ENCODE measurements at regions of chr1 and their contacts with region 1.

Region 1: GRCh38 chr1:62601457-62601856 is 4.1 kb downstream of the ANGPTL3 start:
- DNase-seq: peak; percentile 80
- ATAC-seq: peak; percentile 94
- H3K4me3 ChIP-seq: no peak overlapping the region
- H3K27ac ChIP-seq: no peak overlapping the region
- H3K4me1 ChIP-seq: peaks cover 5% of the 10 kb centered on the region; the same call in 1 of the 2 replicates
- H3K27me3 ChIP-seq: no peaks in the 10 kb centered on the region
- CTCF ChIP-seq: no peak
- POLR2A ChIP-seq: no peak
- RAD21 ChIP-seq: no peak

Region 2: DNA sequence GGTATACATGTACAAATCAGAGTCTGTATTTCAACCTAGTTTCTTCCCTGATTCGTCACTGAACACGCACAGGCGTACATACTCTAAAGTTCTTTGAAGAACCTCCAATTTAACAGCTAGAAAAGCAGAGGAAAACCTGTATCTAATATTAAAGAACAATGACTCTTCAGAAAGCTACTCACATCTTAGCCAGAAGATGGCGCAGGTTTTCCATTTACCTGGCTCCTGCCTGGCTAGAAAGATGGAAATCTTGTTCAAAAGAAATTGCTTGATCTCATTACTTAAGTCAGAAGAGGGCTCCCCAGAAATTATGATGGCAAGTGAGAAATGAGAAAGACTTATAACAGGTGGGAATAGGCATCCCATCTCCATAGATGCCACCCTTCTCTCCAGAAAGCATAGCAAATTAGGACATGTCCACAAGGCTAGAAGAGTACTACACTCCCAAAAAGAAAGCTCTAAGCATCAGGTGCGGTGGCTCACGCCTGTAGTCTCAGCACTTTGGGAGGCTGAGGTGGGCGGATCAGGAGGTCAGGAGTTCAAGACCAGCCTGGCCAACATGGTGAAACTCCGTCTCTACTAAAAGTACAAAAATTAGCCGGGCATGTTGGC is 425.8 kb before region 1 on chr1:
- CTCF ChIA-PET with region 1: no interaction called
- POLR2A ChIA-PET with region 1: no interaction called
- dilution Hi-C with region 1: no loop called
- in situ Hi-C with region 1: no loop called
- intact Hi-C with region 1: no loop called
- DNase-seq: peak; percentile 45
- ATAC-seq: peak; percentile 66
- H3K4me3 ChIP-seq: no peak overlapping the region
- H3K27ac ChIP-seq: no peak overlapping the region
- H3K4me1 ChIP-seq: no peaks in the 10 kb centered on the region
- H3K27me3 ChIP-seq: no peaks in the 10 kb centered on the region; the same call in none of the 2 replicates
- CTCF ChIP-seq: peak; percentile 79
- POLR2A ChIP-seq: no peak
- RAD21 ChIP-seq: peak; percentile 71

Region 3: DNA sequence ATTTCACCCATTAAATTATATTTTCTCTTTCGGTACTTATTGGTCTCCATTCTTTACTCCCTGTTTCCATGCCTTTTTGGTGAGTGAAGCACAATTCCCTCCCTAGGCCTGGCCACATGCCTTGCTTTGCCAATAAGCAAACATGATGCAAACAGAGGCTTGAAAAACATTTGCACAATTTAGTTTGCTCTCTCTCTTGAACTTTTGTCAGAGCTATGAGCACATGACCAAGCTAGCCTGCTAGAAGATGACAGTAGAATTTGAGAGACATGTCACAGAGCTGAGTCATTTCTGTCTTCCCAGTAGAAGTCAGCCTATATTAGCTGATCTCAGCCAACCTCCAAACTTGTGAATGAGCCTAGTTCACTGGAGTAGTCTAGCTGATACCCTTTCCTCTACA is 20.4 kb after region 1 on chr1:
- CTCF ChIA-PET with region 1: no interaction called
- POLR2A ChIA-PET with region 1: no interaction called
- dilution Hi-C with region 1: no loop called
- in situ Hi-C with region 1: no loop called
- intact Hi-C with region 1: loop called (anchors 2 kb)
- DNase-seq: peak; percentile 95
- ATAC-seq: peak; percentile 94
- H3K4me3 ChIP-seq: no peak overlapping the region
- H3K27ac ChIP-seq: no peak overlapping the region
- H3K4me1 ChIP-seq: peaks cover 5% of the 10 kb centered on the region
- H3K27me3 ChIP-seq: no peaks in the 10 kb centered on the region
- CTCF ChIP-seq: no peak
- POLR2A ChIP-seq: no peak
- RAD21 ChIP-seq: no peak

Measured in IMR-90 (cell line).